HepG2 (cell line): ENCODE measurements at regions of chr3 and their contacts with region 1.

Region 1: GRCh38 chr3:52851348-52851747 is 16.5 kb upstream of the MUSTN1 start:
- DNase-seq: peak; percentile 58
- ATAC-seq: peak; percentile 94
- H3K4me3 ChIP-seq: no peak overlapping the region
- H3K27ac ChIP-seq: no peak overlapping the region
- H3K4me1 ChIP-seq: no peaks in the 10 kb centered on the region
- H3K27me3 ChIP-seq: no peaks in the 10 kb centered on the region
- CTCF ChIP-seq: peak; percentile 85
- EP300 ChIP-seq: no peak
- POLR2A ChIP-seq: no peak
- RAD21 ChIP-seq: peak; percentile 96

Region 2: GRCh38 chr3:52867098-52867800 is 15.9 kb after region 1 on chr3:
- CTCF ChIA-PET with region 1: no interaction called
- POLR2A ChIA-PET with region 1: no interaction called
- in situ Hi-C with region 1: no loop called
- intact Hi-C with region 1: no loop called
- DNase-seq: no peak
- ATAC-seq: no peak; the same call in 2 of the 3 replicates
- H3K4me3 ChIP-seq: no peak overlapping the region
- H3K27ac ChIP-seq: no peak overlapping the region
- H3K4me1 ChIP-seq: peaks cover 23% of the 10 kb centered on the region
- H3K27me3 ChIP-seq: no peaks in the 10 kb centered on the region
- CTCF ChIP-seq: no peak
- EP300 ChIP-seq: no peak
- POLR2A ChIP-seq: no peak
- RAD21 ChIP-seq: no peak

Region 3: DNA sequence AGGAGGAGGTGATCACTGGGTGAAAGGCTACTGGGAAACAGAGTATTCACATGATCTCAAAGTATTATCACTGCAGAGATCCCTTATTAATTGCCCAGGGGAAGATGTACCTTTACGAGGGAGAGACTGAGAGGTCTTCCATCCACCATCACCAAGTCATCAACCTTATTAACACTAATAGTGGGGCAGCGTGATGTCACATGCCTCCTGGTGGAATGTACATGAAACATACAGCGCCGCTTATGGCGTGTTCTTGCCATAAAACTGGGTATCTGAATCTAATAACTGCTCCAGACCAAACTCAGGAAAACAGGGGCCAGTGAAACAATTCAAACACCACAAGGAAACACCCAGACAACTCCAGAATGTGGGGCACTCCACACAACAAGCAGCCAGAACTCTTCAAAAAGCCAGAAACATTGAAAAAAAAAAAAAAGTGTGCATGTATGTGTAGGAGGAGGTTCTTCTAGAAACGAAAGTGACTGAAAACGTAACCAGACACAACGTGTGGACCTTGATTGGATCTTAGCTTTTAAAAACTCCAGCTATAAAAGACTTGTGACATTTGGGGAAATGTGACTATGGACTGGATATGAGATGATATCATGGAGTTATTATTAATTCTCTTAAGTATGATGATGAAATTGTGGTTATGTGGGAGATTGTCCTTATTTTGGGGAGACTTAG is 41.4 kb after region 1 on chr3:
- CTCF ChIA-PET with region 1: no interaction called
- POLR2A ChIA-PET with region 1: no interaction called
- in situ Hi-C with region 1: no loop called
- intact Hi-C with region 1: loop called (anchors 5 kb)
- DNase-seq: no peak
- ATAC-seq: no peak
- H3K4me3 ChIP-seq: no peak overlapping the region
- H3K27ac ChIP-seq: peak overlapping the region; percentile 68
- H3K4me1 ChIP-seq: peaks cover 62% of the 10 kb centered on the region
- H3K27me3 ChIP-seq: no peaks in the 10 kb centered on the region
- CTCF ChIP-seq: no peak
- EP300 ChIP-seq: no peak
- POLR2A ChIP-seq: no peak
- RAD21 ChIP-seq: no peak

Region 4: GRCh38 chr3:52934630-52935530 is 83.5 kb after region 1 on chr3:
- CTCF ChIA-PET with region 1: interaction called, 33 read pairs
- POLR2A ChIA-PET with region 1: no interaction called
- in situ Hi-C with region 1: loop called (anchors 10 kb)
- intact Hi-C with region 1: loop called (anchors 1 kb)
- DNase-seq: peak; percentile 46
- ATAC-seq: peak; percentile 92
- H3K4me3 ChIP-seq: no peak overlapping the region
- H3K27ac ChIP-seq: no peak overlapping the region
- H3K4me1 ChIP-seq: peaks cover 6% of the 10 kb centered on the region; the same call in 1 of the 2 replicates
- H3K27me3 ChIP-seq: no peaks in the 10 kb centered on the region
- CTCF ChIP-seq: peak; percentile 81
- EP300 ChIP-seq: no peak
- POLR2A ChIP-seq: no peak
- RAD21 ChIP-seq: peak; percentile 26; the same call in 1 of the 2 replicates

Region 5: DNA sequence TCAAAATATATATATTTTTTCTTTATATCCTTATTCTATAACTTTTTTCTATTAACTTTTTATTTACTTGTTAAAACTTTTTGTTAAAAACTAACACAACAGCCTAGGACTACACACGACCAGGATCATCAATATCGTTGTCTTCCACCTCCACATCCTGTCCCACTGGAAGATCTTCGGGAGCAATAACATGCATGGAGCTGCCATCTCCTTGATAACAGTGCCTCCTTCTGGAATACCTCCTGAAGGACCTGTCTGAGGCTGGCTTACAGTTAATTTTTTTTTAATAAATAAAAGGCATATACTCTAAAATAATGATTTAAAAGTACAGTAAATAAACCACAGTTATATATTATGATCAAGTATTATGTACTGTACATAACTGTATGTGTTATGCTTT is 135.6 kb after region 1 on chr3:
- CTCF ChIA-PET with region 1: no interaction called
- POLR2A ChIA-PET with region 1: no interaction called
- in situ Hi-C with region 1: no loop called
- intact Hi-C with region 1: loop called (anchors 5 kb)
- DNase-seq: no peak
- ATAC-seq: no peak
- H3K4me3 ChIP-seq: no peak overlapping the region
- H3K27ac ChIP-seq: no peak overlapping the region
- H3K4me1 ChIP-seq: peaks cover 17% of the 10 kb centered on the region
- H3K27me3 ChIP-seq: no peaks in the 10 kb centered on the region
- CTCF ChIP-seq: peak; percentile 38
- EP300 ChIP-seq: no peak
- POLR2A ChIP-seq: no peak
- RAD21 ChIP-seq: no peak

Region 6: DNA sequence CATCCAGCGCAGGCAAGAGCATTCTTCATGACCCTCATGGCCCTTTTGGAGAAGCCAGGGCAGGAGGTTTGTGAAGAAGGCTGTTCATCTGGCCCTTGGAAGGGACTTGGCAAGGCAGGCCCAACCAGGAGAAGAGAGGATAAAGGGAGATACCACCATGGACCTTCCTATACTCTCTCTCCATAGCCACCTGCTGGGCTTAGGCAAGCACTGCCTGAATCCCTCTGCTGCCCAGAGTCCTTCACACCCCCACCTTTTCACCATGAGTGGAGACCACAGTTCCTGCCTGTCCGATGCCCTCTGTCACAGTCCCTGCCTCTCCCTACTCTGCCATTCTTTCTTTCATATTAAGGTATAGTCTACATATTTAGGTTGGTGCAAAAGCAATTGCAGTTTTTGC is 205.1 kb after region 1 on chr3:
- CTCF ChIA-PET with region 1: interaction called, 15 read pairs
- POLR2A ChIA-PET with region 1: no interaction called
- in situ Hi-C with region 1: no loop called
- intact Hi-C with region 1: loop called (anchors 1 kb)
- DNase-seq: peak; percentile 66
- ATAC-seq: peak; percentile 100
- H3K4me3 ChIP-seq: no peak overlapping the region
- H3K27ac ChIP-seq: no peak overlapping the region
- H3K4me1 ChIP-seq: no peaks in the 10 kb centered on the region
- H3K27me3 ChIP-seq: no peaks in the 10 kb centered on the region; a peak in 1 of 5 replicates
- CTCF ChIP-seq: peak; percentile 71
- EP300 ChIP-seq: no peak
- POLR2A ChIP-seq: no peak
- RAD21 ChIP-seq: peak; percentile 54

Region 7: DNA sequence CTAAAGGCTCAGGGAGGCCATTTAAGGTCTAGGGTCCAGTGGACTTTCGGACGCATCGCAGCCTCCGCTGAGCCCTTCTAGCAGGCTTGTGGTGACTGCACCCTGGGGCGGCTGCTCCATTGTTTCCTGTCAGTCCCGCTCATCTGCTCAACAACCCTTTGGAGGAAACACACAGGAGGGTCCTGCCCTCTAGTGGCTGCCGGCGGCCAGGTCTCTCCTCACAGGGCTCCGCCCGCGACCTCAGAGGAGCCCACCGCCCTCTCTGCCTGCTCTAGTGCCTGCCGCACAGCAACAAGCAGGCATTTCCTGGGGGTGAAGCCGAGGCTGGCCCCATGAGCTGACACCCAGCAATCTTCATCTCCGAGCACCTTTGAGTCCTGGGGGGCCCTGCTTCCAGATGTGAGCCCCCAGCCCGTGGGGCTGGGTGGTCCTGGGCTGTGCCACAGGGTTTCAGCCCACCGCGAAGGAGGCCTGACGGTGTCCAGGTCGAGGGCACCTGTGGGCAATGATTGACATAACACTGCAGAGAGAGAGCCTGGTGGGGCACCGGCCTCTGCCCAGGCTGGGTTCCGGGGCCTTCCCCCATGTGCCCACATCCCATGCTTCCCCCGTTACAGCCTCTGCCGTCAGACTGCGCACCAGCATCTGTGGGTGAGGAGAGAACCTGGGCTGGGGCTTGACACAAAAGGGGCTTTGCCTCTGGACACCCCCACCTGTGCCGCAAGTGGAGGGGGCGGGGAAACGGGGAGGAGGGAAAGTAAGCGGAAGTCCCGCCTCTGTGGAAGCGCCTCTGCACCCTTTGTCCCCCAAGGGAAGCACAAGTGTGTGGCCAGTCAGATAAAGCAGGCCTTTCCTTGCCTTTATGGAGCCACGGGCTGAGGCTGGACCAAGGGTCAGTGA is 221.6 kb after region 1 on chr3:
- CTCF ChIA-PET with region 1: interaction called, 14 read pairs
- POLR2A ChIA-PET with region 1: no interaction called
- in situ Hi-C with region 1: loop called (anchors 5 kb)
- intact Hi-C with region 1: loop called (anchors 1 kb)
- DNase-seq: peak; percentile 81
- ATAC-seq: peak; percentile 93
- H3K4me3 ChIP-seq: peak overlapping the region; percentile 67 to 83 (median 70)
- H3K27ac ChIP-seq: peak overlapping the region; percentile 71
- H3K4me1 ChIP-seq: peaks cover 27% of the 10 kb centered on the region
- H3K27me3 ChIP-seq: peaks cover 0 to 1% of the 10 kb centered on the region in 2 experiments; a peak in 2 of 5 replicates
- CTCF ChIP-seq: peak; percentile 99
- EP300 ChIP-seq: no peak
- POLR2A ChIP-seq: peak; percentile 45 to 82; a peak in 3 of 4 replicates
- RAD21 ChIP-seq: peak; percentile 91

Region 8: DNA sequence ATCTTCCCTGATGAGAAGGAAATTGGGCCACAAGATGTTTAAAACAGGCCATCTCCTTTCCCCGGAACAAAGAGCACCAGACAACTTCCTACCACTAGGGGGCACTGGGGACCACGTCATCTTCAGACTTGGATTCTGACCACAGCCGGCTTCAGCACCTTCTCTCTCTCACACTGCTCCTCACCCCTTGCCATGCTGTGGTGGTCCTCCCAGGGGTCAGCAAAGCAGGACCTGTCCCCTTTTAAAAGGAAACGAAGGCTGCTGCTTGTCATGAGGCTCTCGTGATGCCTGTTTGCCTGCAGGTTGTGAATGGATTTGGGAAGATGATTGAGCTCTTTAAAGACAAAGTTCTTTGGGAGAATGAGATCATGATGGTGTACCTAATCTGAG is 262.7 kb after region 1 on chr3:
- CTCF ChIA-PET with region 1: no interaction called
- POLR2A ChIA-PET with region 1: no interaction called
- in situ Hi-C with region 1: no loop called
- intact Hi-C with region 1: loop called (anchors 1 kb)
- DNase-seq: peak; percentile 66
- ATAC-seq: peak; percentile 88
- H3K4me3 ChIP-seq: no peak overlapping the region
- H3K27ac ChIP-seq: no peak overlapping the region
- H3K4me1 ChIP-seq: peaks cover 11% of the 10 kb centered on the region
- H3K27me3 ChIP-seq: no peaks in the 10 kb centered on the region; a peak in 1 of 5 replicates
- CTCF ChIP-seq: peak; percentile 95
- EP300 ChIP-seq: no peak
- POLR2A ChIP-seq: no peak
- RAD21 ChIP-seq: peak; percentile 86

Region 9: DNA sequence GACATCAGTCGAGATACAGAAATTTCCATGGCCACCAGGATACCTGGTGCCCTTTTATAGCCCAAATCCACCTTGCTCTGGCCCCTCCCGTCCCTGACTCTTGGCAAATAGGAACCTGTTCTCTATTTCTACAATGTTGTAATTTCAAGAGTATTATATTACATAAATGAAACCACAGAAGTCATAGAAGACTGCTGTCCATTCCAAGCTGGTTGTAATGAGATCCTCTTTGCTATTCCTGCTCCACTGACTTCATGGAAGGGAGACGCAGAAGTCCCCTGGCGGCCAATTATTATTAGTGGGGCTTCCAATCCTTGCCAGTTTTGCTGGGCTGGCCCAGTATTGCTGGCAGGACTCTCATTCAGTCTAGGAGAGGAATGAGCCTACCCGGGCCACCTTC is 469.3 kb after region 1 on chr3:
- CTCF ChIA-PET with region 1: no interaction called
- POLR2A ChIA-PET with region 1: no interaction called
- in situ Hi-C with region 1: no loop called
- intact Hi-C with region 1: no loop called
- DNase-seq: no peak
- ATAC-seq: no peak
- H3K4me3 ChIP-seq: no peak overlapping the region
- H3K27ac ChIP-seq: no peak overlapping the region
- H3K4me1 ChIP-seq: no peaks in the 10 kb centered on the region
- H3K27me3 ChIP-seq: no peaks in the 10 kb centered on the region
- CTCF ChIP-seq: no peak
- EP300 ChIP-seq: no peak
- POLR2A ChIP-seq: no peak
- RAD21 ChIP-seq: no peak